ENCODE measurements at regions of chr6 and their contacts with region 1.

Region 1: DNA sequence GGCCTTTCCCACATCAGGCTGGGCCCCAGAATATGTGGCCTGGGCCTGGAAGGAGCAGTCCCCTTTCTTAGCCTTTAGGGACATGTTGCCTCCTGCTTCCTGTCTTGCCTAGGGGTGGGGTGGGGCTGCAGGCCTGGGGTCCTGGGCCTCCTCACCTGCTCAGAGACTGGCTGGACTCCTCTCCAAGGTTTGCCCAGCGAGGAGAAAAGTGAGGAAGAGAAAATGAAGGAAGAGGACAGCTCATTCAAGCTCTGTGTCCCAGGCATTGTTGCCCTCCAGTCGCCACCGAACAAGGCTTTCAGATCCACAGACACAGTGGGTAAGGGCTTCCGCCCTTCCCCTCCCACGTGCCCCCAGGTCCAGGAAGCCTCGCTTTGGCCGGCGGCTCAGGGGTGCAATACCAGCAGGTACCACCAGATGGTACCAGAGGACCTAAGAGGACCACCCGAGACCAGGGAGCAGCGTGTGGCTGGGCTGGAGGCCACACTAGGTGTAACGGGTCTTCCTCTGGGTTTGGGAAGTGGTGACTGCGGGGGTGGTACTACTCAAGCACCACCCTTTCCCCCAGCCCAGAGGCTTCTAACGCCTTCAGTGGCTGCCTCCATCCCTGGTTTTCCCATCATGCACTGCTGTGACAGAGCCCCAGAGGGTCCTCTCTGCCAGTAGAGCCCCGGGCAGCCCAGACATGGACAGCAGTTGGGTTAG is 5.5 kb upstream of the BAK1 start:
- DNase-seq: peak; percentile 95
- ATAC-seq: peak; percentile 94
- H3K4me3 Mint-ChIP-seq: peak overlapping the region; percentile 78
- H3K27ac Mint-ChIP-seq: peak overlapping the region; percentile 95
- H3K4me1 Mint-ChIP-seq: peaks cover 24% of the 10 kb centered on the region
- H3K27me3 Mint-ChIP-seq: no peaks in the 10 kb centered on the region
- CTCF ChIP-seq: peak; percentile 94

Region 2: DNA sequence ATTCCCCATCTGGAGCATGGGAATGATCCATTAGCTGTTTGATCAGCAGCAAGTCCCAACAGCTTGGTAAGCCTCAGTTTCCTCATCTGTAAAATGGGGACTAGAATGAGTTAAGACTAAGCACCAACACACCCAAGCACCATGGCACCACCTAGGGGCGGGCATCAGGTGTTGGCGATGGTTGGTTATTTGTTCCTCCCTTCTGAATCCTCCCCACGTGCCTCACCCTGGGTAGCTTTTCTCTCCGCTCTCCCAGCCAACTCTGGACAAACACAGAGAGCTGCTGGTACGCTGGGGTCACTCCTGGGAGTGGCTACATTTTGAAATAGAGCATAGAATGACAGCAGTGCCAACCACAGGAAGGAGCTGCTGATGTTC is 22.2 kb after region 1 on chr6:
- CTCF ChIA-PET with region 1: interaction called, 74 read pairs
- POLR2A ChIA-PET with region 1: no interaction called
- intact Hi-C with region 1: no loop called
- DNase-seq: peak; percentile 70
- ATAC-seq: peak; percentile 84
- H3K4me3 Mint-ChIP-seq: no peak overlapping the region
- H3K27ac Mint-ChIP-seq: no peak overlapping the region
- H3K4me1 Mint-ChIP-seq: no peaks in the 10 kb centered on the region
- H3K27me3 Mint-ChIP-seq: no peaks in the 10 kb centered on the region
- CTCF ChIP-seq: peak; percentile 40

Region 3: GRCh38 chr6:33620856-33621710 is 35.5 kb after region 1 on chr6 and contains the start of gene ITPR3:
- CTCF ChIA-PET with region 1: interaction called, 19 read pairs
- POLR2A ChIA-PET with region 1: no interaction called
- intact Hi-C with region 1: loop called (anchors 2 kb)
- DNase-seq: peak; percentile 80
- ATAC-seq: peak; percentile 86
- H3K4me3 Mint-ChIP-seq: peak within 1 kb of the TSS; percentile 88
- H3K27ac Mint-ChIP-seq: peak within 1 kb of the TSS; percentile 88
- H3K4me1 Mint-ChIP-seq: peaks cover 49% of the 10 kb centered on the region
- H3K27me3 Mint-ChIP-seq: no peaks in the 10 kb centered on the region
- CTCF ChIP-seq: no peak
- total RNA-seq, gene ITPR3: 36.6 to 38.0 TPM

Region 4: GRCh38 chr6:33642897-33643296 is 57.3 kb after region 1 on chr6:
- CTCF ChIA-PET with region 1: no interaction called
- POLR2A ChIA-PET with region 1: no interaction called
- intact Hi-C with region 1: no loop called
- DNase-seq: no peak
- ATAC-seq: no peak
- H3K4me3 Mint-ChIP-seq: no peak overlapping the region
- H3K27ac Mint-ChIP-seq: no peak overlapping the region
- H3K4me1 Mint-ChIP-seq: peaks cover 25% of the 10 kb centered on the region
- H3K27me3 Mint-ChIP-seq: no peaks in the 10 kb centered on the region
- CTCF ChIP-seq: no peak

Region 5: GRCh38 chr6:33694401-33694931 is 108.9 kb after region 1 on chr6:
- CTCF ChIA-PET with region 1: interaction called, 17 read pairs
- POLR2A ChIA-PET with region 1: interaction called, 4 read pairs
- intact Hi-C with region 1: no loop called
- DNase-seq: peak; percentile 88
- ATAC-seq: peak; percentile 83
- H3K4me3 Mint-ChIP-seq: peak overlapping the region; percentile 29
- H3K27ac Mint-ChIP-seq: peak overlapping the region; percentile 79
- H3K4me1 Mint-ChIP-seq: peaks cover 72% of the 10 kb centered on the region
- H3K27me3 Mint-ChIP-seq: no peaks in the 10 kb centered on the region
- CTCF ChIP-seq: no peak

Region 6: GRCh38 chr6:33700391-33701050 is 115.0 kb after region 1 on chr6:
- CTCF ChIA-PET with region 1: interaction called, 31 read pairs
- POLR2A ChIA-PET with region 1: no interaction called
- intact Hi-C with region 1: loop called (anchors 2 kb)
- DNase-seq: peak; percentile 86
- ATAC-seq: peak; percentile 87
- H3K4me3 Mint-ChIP-seq: no peak overlapping the region
- H3K27ac Mint-ChIP-seq: peak overlapping the region; percentile 37
- H3K4me1 Mint-ChIP-seq: peaks cover 35% of the 10 kb centered on the region
- H3K27me3 Mint-ChIP-seq: no peaks in the 10 kb centered on the region
- CTCF ChIP-seq: peak; percentile 82

Region 7: GRCh38 chr6:33905071-33905609 is 319.6 kb after region 1 on chr6:
- CTCF ChIA-PET with region 1: no interaction called
- POLR2A ChIA-PET with region 1: no interaction called
- intact Hi-C with region 1: no loop called
- DNase-seq: peak; percentile 61
- ATAC-seq: peak; percentile 50
- H3K4me3 Mint-ChIP-seq: peak overlapping the region; percentile 7
- H3K27ac Mint-ChIP-seq: peak overlapping the region; percentile 77
- H3K4me1 Mint-ChIP-seq: peaks cover 54% of the 10 kb centered on the region
- H3K27me3 Mint-ChIP-seq: no peaks in the 10 kb centered on the region
- CTCF ChIP-seq: no peak